Caco-2 (cell line): ENCODE measurements at regions of chr19 and their contacts with region 1.

Region 1: DNA sequence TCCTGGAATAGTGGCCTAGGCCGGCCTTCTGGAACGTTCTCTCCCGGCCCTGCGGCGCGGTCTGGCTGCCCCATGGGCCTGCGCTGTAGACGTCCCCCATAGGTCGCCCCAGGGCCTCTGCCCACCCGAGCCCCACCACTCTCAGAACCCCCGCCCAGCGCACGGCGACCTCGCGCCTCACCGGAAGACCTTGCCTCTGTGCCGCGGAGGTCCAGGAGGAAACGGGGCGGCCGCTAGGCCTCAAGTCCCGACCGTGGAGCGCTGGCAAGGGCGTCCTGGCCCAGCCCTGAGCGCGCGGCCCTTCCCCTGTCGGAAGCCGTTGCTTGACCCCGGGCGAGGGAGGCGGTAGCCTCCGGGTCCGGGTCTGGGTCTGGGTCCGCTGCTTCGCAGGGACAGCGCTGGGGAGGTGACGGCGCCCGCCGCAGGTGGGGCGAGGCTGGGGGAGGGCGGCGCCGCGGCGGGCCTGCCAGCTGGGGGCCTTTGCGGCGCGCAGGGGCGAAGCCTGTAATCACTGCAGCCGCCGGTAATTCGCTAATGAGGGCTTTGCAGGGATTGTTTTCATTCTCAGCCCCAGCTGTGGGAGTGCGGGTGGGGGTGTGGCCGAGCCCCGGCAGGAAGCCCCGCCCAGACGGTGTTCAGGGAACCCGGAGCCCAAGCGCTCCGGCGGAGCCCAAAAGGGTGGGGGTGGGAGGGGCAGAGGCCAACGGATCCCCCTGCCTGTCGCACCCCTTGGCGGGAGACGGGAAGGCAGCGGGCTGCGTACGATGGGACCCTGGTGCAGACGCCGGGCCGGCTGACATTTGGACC is 8.6 kb downstream of the C19orf25 start:
- DNase-seq: peak; percentile 78 to 81
- H3K4me3 ChIP-seq: peak overlapping the region; percentile 65
- H3K4me3 Mint-ChIP-seq: peak overlapping the region; percentile 89
- H3K27ac Mint-ChIP-seq: peak overlapping the region; percentile 90
- H3K4me1 ChIP-seq: peaks cover 15% of the 10 kb centered on the region
- H3K4me1 Mint-ChIP-seq: peaks cover 4% of the 10 kb centered on the region
- H3K27me3 ChIP-seq: no peaks in the 10 kb centered on the region
- H3K27me3 Mint-ChIP-seq: no peaks in the 10 kb centered on the region
- CTCF ChIP-seq: no peak

Region 2: DNA sequence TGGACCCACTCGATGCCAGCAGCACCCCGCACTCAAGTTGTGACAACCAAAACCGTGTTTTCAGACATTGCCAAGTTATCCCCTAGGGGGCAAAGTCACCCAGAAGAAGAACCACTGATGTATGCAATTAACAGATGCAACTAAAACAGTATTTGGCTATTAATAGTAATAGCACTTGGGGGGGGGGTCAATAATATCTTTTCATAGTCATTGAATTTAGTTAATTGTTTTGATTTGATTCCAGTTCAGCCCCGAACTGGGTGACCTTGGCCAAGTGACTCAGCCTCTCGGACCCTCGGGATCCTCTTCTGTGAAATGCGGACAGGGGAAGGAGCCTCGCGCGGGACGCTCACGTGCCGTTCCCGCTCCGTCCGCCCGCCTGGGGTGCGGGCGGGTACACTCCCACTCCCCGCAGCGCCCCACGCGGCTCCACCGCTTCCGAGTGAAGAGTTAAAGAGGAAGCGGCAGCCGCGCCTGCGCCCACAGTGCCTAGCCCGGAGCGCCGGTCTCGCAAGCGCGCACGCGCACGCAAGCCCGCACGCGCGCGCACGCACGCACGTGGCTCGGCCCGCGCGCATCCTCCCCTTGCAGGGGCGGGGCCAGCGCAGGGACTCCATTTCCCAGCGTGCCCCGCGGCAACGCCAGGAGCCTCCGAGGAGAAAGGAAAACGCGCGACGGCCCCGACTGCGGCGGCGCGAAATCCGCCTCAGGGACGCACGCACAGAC is 63.5 kb before region 1 on chr19:
- CTCF ChIA-PET with region 1: no interaction called
- POLR2A ChIA-PET with region 1: no interaction called
- intact Hi-C with region 1: loop called (anchors 5 kb)
- DNase-seq: peak; percentile 97 to 99
- H3K4me3 ChIP-seq: peak overlapping the region; percentile 57
- H3K4me3 Mint-ChIP-seq: peak overlapping the region; percentile 75
- H3K27ac Mint-ChIP-seq: peak overlapping the region; percentile 53
- H3K4me1 ChIP-seq: peaks cover 12% of the 10 kb centered on the region; the same call in 1 of the 2 replicates
- H3K4me1 Mint-ChIP-seq: peaks cover 18% of the 10 kb centered on the region
- H3K27me3 ChIP-seq: no peaks in the 10 kb centered on the region
- H3K27me3 Mint-ChIP-seq: no peaks in the 10 kb centered on the region
- CTCF ChIP-seq: peak; percentile 58 to 63

Region 3: DNA sequence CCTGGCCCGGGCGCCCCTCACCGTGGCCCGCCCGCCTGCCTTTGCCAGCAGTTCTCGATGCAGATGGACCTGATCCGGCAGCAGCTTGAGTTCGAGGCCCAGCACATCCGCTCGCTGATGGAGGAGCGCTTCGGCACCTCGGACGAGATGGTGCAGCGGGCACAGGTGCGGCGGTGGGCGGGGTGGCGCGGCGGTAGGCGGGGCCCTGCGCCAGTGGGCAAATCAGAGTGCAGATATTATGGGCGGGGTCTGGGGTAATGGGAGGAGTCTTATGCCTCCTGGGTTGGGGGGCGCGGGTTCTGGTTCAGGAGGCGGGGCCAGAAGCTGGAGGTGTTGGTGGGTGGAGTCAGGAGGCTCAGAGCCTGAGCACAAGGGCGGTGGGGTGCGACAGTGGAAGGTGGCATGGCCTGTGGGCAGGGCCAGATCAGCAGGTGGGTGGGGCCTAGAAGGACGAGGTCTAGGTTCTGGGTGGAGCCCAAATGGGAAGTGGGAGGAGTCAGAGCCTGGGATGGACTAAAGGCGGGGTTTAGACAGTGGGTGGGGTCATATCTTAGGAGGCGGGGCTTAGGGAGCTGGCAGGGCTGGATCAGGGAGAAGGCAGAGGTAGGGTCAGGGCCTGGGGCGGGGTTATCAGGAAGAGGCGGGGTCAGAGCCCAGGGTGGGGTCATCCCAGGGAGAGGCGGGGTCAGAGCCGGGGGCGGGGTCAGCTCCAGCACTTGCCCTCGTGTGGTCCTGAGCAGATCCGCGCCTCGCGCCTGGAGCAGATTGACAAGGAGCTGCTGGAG is 14.9 kb before region 1 on chr19:
- CTCF ChIA-PET with region 1: no interaction called
- POLR2A ChIA-PET with region 1: no interaction called
- intact Hi-C with region 1: no loop called
- DNase-seq: peak; percentile 64 to 74
- H3K4me3 ChIP-seq: no peak overlapping the region
- H3K4me3 Mint-ChIP-seq: no peak overlapping the region
- H3K27ac Mint-ChIP-seq: no peak overlapping the region
- H3K4me1 ChIP-seq: no peaks in the 10 kb centered on the region
- H3K4me1 Mint-ChIP-seq: no peaks in the 10 kb centered on the region
- H3K27me3 ChIP-seq: no peaks in the 10 kb centered on the region
- H3K27me3 Mint-ChIP-seq: peaks cover 4% of the 10 kb centered on the region
- CTCF ChIP-seq: no peak

Region 4: GRCh38 chr19:1507763-1508509 is 37.5 kb after region 1 on chr19:
- CTCF ChIA-PET with region 1: no interaction called
- POLR2A ChIA-PET with region 1: no interaction called
- intact Hi-C with region 1: loop called (anchors 2 kb)
- DNase-seq: peak; percentile 93 to 95
- H3K4me3 ChIP-seq: peak overlapping the region; percentile 39
- H3K4me3 Mint-ChIP-seq: peak overlapping the region; percentile 94
- H3K27ac Mint-ChIP-seq: peak overlapping the region; percentile 96
- H3K4me1 ChIP-seq: peaks cover 34% of the 10 kb centered on the region
- H3K4me1 Mint-ChIP-seq: peaks cover 12% of the 10 kb centered on the region
- H3K27me3 ChIP-seq: no peaks in the 10 kb centered on the region
- H3K27me3 Mint-ChIP-seq: no peaks in the 10 kb centered on the region
- CTCF ChIP-seq: no peak

Region 5: DNA sequence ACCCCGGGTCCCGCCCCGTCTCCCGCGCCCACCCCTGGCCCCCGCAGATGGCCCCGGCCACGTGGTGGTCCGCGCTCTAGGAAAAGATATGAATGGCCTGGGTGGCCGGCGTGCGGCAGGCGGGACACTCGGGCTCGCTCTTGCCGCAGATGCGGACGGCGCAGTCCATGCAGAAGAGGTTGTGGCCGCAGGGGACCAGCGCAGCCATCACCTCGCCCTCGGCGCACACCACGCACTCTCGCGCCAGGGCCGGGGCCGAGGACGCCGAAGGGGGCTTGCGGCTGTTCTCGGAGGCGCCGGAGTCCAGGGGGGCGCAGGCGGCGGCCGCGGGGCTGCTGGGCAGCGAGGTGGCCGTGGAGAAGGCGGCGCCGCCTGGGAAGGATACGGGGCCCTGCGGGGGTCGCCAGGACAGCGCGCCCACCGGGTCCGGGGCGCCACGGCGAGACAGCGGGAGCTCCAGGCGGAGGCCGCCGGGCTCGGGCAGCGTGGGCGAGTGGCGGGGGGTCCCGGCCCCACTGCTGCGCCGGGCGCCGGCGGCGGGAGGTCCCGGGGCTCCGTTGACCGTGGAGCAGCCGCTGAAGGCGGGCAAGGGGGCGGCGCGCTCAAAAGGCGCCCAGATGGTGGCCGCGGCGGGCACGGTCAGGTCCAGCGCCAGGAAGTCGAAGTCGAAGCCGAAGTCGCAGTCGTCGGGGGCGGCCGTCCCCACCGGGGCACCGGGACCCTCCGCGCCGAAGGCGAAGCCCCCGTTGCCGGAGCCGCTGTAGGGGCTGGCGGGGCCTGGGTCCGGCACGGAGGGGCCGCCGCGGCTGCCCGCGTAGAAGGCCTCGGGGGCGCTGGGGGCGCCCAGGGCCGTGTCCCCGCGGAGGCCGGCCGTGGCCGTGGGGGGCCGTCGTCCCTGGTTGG is 85.3 kb after region 1 on chr19:
- CTCF ChIA-PET with region 1: no interaction called
- POLR2A ChIA-PET with region 1: no interaction called
- intact Hi-C with region 1: no loop called
- DNase-seq: no peak
- H3K4me3 ChIP-seq: no peak overlapping the region
- H3K4me3 Mint-ChIP-seq: no peak overlapping the region
- H3K27ac Mint-ChIP-seq: no peak overlapping the region
- H3K4me1 ChIP-seq: no peaks in the 10 kb centered on the region
- H3K4me1 Mint-ChIP-seq: no peaks in the 10 kb centered on the region
- H3K27me3 ChIP-seq: no peaks in the 10 kb centered on the region
- H3K27me3 Mint-ChIP-seq: no peaks in the 10 kb centered on the region
- CTCF ChIP-seq: no peak